ENCODE measurements at regions of chr2 and their contacts with region 1.

Region 1: GRCh38 chr2:62705007-62705829 is at the start of gene EHBP1:
- DNase-seq: peak; percentile 96 to 99 (median 98)
- H3K4me3 ChIP-seq: peak within 1 kb of the TSS; percentile 61 to 83 (median 71)
- H3K4me3 Mint-ChIP-seq: peak within 1 kb of the TSS; percentile 92 to 95
- H3K27ac ChIP-seq: peak within 1 kb of the TSS; percentile 56 to 69
- H3K27ac Mint-ChIP-seq: peak within 1 kb of the TSS; percentile 82 to 94 (median 85)
- H3K4me1 ChIP-seq: peaks cover 17 to 20% of the 10 kb centered on the region in 2 donors
- H3K4me1 Mint-ChIP-seq: peaks cover 32% of the 10 kb centered on the region
- H3K27me3 ChIP-seq: no peaks in the 10 kb centered on the region
- H3K27me3 Mint-ChIP-seq: peaks cover 0 to 6% (median 3%) of the 10 kb centered on the region in 3 donors
- CTCF ChIP-seq: no peak
- polyA plus RNA-seq, gene EHBP1: 4.2 to 6.1 (median 6.0) TPM

Region 2: GRCh38 chr2:62195421-62196277 is 509.6 kb before region 1 on chr2 and contains the start of gene B3GNT2:
- intact Hi-C with region 1: loop called in 1 of 2 experiments (anchors 10 kb)
- DNase-seq: peak; percentile 67 to 75 (median 70)
- H3K4me3 ChIP-seq: peak within 1 kb of the TSS; percentile 90 to 98 (median 97)
- H3K4me3 Mint-ChIP-seq: peak within 1 kb of the TSS; percentile 89 to 90
- H3K27ac ChIP-seq: peak within 1 kb of the TSS; percentile 74 to 95
- H3K27ac Mint-ChIP-seq: peak within 1 kb of the TSS; percentile 76 to 94 (median 90)
- H3K4me1 ChIP-seq: peaks cover 51 to 60% of the 10 kb centered on the region in 2 donors
- H3K4me1 Mint-ChIP-seq: peaks cover 51% of the 10 kb centered on the region
- H3K27me3 ChIP-seq: no peaks in the 10 kb centered on the region
- H3K27me3 Mint-ChIP-seq: peaks cover 0 to 3% (median 1%) of the 10 kb centered on the region in 3 donors
- CTCF ChIP-seq: no peak
- polyA plus RNA-seq, gene B3GNT2: 15.9 to 34.7 (median 18.5) TPM

Region 3: DNA sequence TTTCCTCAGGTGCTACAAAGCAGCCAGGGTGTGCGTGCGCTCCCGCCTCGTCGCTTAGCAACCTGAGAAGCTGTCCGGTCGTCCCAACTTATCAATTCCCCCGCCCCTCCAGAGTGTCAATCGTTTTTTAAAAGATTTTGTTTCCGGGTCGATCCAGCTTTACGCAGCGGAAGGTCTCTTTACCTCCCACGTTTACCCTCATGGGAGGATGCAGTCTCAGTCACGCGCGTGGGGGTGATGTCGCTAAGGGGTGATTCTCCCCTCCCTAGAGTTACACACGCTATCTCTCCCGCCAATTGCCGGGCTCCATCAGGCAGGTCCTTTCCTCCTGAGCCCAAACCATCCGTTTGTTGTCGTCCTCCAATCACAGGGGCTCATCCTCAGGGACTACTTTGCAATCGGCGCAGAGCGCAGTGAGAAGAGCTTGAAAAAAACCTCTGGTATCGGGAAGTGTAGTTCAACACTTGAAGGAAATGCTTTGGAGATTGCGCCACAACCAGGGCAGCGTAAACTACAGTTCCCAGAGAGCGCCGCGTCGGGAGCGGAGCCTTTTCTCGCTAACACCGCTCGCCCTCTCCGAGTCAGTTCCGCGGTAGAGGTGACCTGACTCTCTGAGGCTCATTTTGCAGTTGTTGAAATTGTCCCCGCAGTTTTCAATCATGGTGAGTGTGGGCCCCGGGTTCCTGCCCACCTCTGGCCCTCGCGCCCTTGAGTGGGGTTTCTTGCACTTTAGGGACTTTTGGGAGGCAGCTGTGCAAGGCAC is 883.3 kb after region 1 on chr2 and contains the starts of genes MDH1 and WDPCP:
- intact Hi-C with region 1: loop called in 1 of 2 experiments (anchors 10 kb)
- DNase-seq: peak; percentile 96 to 98 (median 97)
- H3K4me3 ChIP-seq: peak within 1 kb of the TSS; percentile 65 to 90 (median 66)
- H3K4me3 Mint-ChIP-seq: peak within 1 kb of the TSS; percentile 99
- H3K27ac ChIP-seq: peak within 1 kb of the TSS; percentile 94 to 96
- H3K27ac Mint-ChIP-seq: peak within 1 kb of the TSS; percentile 98 to 100 (median 99)
- H3K4me1 ChIP-seq: peaks cover 36 to 44% of the 10 kb centered on the region in 2 donors
- H3K4me1 Mint-ChIP-seq: peaks cover 38% of the 10 kb centered on the region
- H3K27me3 ChIP-seq: no peaks in the 10 kb centered on the region
- H3K27me3 Mint-ChIP-seq: peaks cover 0 to 1% (median 0%) of the 10 kb centered on the region in 3 donors
- CTCF ChIP-seq: no peak
- polyA plus RNA-seq, gene MDH1: 63.2 to 218 (median 197) TPM
- polyA plus RNA-seq, gene WDPCP: 3.3 to 5.2 (median 3.7) TPM

Region 4: DNA sequence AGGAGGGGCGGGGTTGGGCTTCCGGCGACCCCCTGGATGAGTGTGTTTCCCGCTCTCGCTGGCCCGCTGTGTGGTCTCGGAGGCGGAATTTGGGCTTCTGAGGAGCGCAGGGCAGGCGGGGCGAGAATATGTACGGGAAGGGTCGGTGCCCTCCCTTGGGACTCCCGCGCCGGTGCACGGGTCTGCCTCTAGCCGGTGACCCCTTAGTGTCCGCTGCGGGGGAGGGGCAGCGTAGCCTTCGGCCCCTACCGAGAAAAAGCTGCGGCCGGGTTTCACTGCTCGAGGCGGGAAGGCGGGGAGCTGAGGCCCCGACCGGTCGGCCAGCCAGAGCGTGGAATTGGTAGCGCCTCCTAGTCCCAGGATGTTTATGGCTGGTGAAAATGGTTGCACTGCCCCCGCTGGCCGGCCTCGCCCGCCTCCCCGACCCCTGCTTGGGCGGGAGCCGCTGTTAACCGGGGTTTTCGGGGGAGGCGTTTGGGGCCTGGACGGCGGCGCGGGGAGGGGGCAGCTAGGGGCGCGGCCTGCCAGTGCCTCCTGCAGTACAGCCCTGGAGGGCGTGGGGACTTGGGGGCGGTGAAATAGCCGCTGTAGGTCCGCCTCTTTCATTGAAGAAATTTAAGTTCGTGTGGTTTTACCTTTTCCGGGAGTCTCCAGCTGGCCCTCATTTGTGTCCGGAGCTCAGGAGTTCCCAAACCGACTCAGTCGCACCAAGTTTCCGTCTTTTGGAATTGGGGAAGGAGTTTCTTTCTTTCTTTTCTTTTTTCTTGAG is 1136.2 kb after region 1 on chr2 and contains the start of gene UGP2:
- intact Hi-C with region 1: loop called in 1 of 2 experiments (anchors 5 kb)
- DNase-seq: peak; percentile 59 to 81 (median 72)
- H3K4me3 ChIP-seq: peak within 1 kb of the TSS; percentile 72 to 92 (median 87)
- H3K4me3 Mint-ChIP-seq: peak within 1 kb of the TSS; percentile 97 to 98
- H3K27ac ChIP-seq: peak within 1 kb of the TSS; percentile 93 to 95
- H3K27ac Mint-ChIP-seq: peak within 1 kb of the TSS; percentile 95 to 99 (median 98)
- H3K4me1 ChIP-seq: peaks cover 28 to 40% of the 10 kb centered on the region in 2 donors
- H3K4me1 Mint-ChIP-seq: peaks cover 53% of the 10 kb centered on the region
- H3K27me3 ChIP-seq: no peaks in the 10 kb centered on the region
- H3K27me3 Mint-ChIP-seq: no peaks in the 10 kb centered on the region
- CTCF ChIP-seq: no peak
- polyA plus RNA-seq, gene UGP2: 22.3 to 71.8 (median 49.9) TPM